ENCODE measurements at regions of chr1 and their contacts with region 1.

Region 1: DNA sequence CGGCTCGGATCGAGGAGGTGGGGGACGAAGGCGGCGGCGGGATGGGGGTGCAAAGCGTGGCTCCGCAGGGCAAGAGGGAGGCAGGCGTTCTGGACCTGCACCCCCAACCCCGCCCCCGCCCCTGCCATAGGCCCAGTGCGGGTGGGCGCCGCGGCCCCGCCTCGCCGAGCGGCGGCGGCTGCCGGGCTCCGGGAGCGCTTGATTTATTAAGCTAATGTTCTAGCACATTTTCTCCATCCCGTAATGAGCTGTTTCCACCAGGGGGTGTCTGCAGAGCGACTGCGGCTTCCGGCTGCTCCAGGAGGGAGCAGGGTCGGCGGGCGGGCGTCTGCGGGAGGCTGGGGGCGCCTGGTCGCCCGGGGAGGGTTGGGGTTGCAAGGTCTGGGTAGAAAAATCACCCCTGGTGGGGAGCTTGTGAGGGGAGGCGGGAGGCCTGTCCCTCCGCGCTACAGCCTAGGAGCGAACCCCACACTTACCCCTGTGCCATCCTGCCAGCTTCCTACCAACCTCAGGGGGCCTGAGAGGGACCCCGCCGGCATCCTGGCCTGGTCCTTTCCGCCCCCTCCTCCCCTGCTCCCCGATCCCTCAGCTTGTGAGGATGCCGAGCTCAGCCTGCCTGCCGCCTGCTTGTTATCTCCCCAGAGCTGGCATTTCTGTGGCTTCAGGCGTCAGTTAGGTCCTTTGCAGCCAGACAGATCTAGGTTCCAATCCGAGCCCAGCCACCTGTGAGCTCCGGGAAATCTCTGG is 48.5 kb upstream of the ACOT11 start:
- DNase-seq: peak in 1 of 5 donors; percentile 64
- ATAC-seq: peak in 3 of 4 donors; percentile 46 to 83 (median 66)
- H3K4me3 ChIP-seq: peak overlapping the region; percentile 11 to 56 (median 40)
- H3K27ac ChIP-seq: no peak overlapping the region
- H3K4me1 ChIP-seq: peaks cover 0 to 15% (median 5%) of the 10 kb centered on the region in 12 donors
- H3K27me3 ChIP-seq: peaks cover 0 to 63% (median 11%) of the 10 kb centered on the region in 9 donors
- CTCF ChIP-seq: peak in 11 of 12 donors; percentile 14 to 58 (median 38)
- POLR2A ChIP-seq: no peak

Region 2: DNA sequence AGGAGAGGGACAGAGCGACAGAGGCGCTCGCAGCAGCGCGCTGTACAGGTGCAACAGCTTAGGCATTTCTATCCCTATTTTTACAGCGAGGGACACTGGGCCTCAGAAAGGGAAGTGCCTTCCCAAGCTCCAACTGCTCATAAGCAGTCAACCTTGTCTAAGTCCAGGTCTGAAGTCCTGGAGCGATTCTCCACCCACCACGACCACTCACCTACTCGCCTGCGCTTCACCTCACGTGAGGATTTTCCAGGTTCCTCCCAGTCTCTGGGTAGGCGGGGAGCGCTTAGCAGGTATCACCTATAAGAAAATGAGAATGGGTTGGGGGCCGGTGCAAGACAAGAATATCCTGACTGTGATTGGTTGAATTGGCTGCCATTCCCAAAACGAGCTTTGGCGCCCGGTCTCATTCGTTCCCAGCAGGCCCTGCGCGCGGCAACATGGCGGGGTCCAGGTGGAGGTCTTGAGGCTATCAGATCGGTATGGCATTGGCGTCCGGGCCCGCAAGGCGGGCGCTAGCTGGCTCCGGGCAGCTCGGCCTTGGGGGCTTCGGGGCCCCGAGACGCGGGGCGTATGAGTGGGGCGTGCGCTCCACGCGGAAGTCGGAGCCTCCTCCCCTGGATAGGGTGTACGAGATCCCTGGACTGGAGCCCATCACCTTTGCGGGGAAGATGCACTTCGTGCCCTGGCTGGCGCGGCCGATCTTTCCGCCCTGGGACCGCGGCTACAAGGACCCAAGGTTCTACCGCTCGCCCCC is 299.6 kb before region 1 on chr1 and contains the starts of genes CYB5RL and MRPL37:
- intact Hi-C with region 1: loop called in 1 of 10 experiments (anchors 10 kb)
- DNase-seq: peak; percentile 92 to 96 (median 94)
- ATAC-seq: peak; percentile 98 to 100 (median 99)
- H3K4me3 ChIP-seq: peak within 1 kb of the TSS; percentile 62 to 96 (median 84)
- H3K27ac ChIP-seq: peak within 1 kb of the TSS; percentile 6 to 91 (median 72)
- H3K4me1 ChIP-seq: peaks cover 0 to 30% (median 19%) of the 10 kb centered on the region in 12 donors
- H3K27me3 ChIP-seq: no peaks in the 10 kb centered on the region
- CTCF ChIP-seq: no peak
- POLR2A ChIP-seq: peak in 1 of 2 donors; percentile 65
- total RNA-seq, gene CYB5RL: 2.8 to 7.5 (median 4.4) TPM
- total RNA-seq, gene MRPL37: 75.6 to 122 (median 89.3) TPM

Region 3: DNA sequence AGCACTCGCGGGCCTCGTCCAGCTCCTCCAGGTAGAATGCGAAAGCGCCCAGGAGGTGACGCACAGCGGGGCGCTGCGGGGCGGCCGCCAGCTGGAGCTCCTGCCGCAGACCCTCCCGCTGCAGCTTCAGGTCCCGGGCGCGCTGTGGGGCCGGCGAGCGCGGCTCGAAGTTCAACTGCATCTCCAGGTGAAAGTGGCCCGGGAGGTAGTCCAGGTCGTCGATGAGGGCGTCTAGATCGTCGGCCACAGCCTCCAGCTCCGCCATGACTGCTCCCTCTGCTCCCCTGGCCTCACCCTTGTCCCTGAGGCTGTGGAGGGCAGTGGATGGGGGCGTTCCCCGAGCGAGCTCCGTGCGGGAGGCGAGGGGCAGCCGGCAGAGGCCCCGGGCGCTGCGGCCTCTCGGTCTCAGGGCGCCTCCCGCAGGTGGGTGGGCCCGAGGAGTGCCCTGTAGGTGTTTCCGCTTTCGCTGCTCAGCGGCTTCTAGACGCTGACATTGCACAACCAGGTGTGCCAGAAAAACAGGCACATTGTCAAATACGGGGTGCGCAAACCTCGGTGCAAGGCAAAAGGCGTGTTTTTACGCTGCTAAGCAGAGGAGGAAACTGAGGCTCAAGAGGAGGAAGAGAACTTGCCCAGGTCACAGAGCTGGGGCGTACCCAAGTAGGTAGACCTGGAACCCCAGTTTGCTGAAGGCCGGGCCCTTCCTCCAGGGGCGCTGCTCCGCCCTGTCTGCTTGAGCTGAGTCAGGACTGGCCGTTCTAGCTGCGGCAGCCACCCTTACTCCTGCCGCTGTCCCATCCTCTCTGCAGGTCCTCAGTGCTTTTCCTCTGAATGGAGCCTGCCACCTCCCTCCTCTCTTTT is 301.6 kb after region 1 on chr1 and contains the start of gene TTC22:
- intact Hi-C with region 1: loop called in 1 of 10 experiments (anchors 10 kb)
- DNase-seq: no peak
- ATAC-seq: peak; percentile 47 to 78 (median 68)
- H3K4me3 ChIP-seq: peak within 1 kb of the TSS in 11 of 12 donors; percentile 0 to 61 (median 38)
- H3K27ac ChIP-seq: peak within 1 kb of the TSS in 2 of 12 donors; percentile 43 to 49
- H3K4me1 ChIP-seq: peaks cover 0 to 21% (median 5%) of the 10 kb centered on the region in 12 donors
- H3K27me3 ChIP-seq: peaks cover 0 to 45% (median 19%) of the 10 kb centered on the region in 9 donors
- CTCF ChIP-seq: peak in 8 of 12 donors; percentile 10 to 37 (median 26)
- POLR2A ChIP-seq: no peak
- total RNA-seq, gene TTC22: 0.12 to 2.5 (median 0.29) TPM in 7 of 9 donors, not detected in the others

Region 4: DNA sequence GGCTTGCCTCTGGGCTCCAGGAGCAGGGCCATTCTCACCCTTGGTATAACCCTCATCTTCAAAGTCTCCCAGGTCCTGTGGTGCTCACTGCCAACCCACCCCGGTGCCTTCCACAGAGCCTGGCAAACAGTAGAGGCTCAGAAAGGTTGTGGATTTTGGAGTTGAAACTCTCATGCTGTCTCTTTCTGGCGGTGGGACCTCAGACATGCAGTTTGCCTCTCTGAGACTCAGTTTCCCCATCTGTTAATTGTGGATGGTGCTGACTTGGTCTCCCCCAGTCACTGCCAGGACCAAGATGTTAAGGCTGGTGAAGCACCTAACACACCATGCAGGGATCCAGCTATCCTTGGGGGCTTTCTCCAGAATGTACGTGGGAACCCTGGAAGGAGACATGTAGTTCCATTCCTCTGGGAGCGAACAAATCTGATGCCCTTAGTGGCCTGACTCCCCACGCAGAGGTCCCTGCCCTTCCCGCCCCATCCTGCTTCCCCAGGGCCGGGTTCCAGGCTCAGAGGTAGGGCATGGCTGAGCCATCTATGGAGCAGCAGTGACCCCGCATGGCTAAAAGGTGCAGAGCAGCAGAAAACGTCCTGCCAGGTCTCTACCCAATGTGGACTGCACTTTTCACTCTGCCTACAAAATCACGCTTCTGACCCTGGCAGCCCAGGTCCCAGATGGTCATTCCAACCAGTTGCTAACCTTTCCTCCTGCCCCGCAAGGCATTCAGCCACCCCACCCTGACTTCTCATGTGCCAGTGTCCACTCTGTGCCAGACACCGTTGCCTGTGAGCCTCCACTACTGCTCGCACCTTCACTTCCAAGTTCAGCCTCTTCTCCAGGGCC is 310.8 kb after region 1 on chr1:
- intact Hi-C with region 1: loop called in 2 of 10 experiments (anchors 5 to 10 kb)
- DNase-seq: peak in 4 of 5 donors; percentile 32 to 64 (median 56)
- ATAC-seq: peak; percentile 82 to 89 (median 86)
- H3K4me3 ChIP-seq: no peak overlapping the region
- H3K27ac ChIP-seq: no peak overlapping the region
- H3K4me1 ChIP-seq: no peaks in the 10 kb centered on the region
- H3K27me3 ChIP-seq: peaks cover 0 to 6% (median 0%) of the 10 kb centered on the region in 9 donors
- CTCF ChIP-seq: peak; percentile 60 to 79 (median 75)
- POLR2A ChIP-seq: no peak